Naive thymus-derived CD4-positive, alpha-beta T cell (primary cell): ENCODE measurements at regions of chr9 and their contacts with region 1.

Region 1: GRCh38 chr9:6008169-6008979 is 7.0 kb downstream of the RANBP6 start:
- DNase-seq: peak; percentile 79 to 98 (median 93)
- ATAC-seq: peak; percentile 84
- H3K4me3 ChIP-seq: peak overlapping the region; percentile 75
- H3K4me3 Mint-ChIP-seq: peak overlapping the region; percentile 74 to 99 (median 94)
- H3K27ac ChIP-seq: peak overlapping the region; percentile 97
- H3K27ac Mint-ChIP-seq: peak overlapping the region; percentile 83 to 97 (median 91)
- H3K4me1 ChIP-seq: peaks cover 20 to 36% of the 10 kb centered on the region in 2 donors
- H3K4me1 Mint-ChIP-seq: peaks cover 26 to 75% (median 65%) of the 10 kb centered on the region in 7 donors
- H3K27me3 ChIP-seq: no peaks in the 10 kb centered on the region
- H3K27me3 Mint-ChIP-seq: no peaks in the 10 kb centered on the region

Region 2: GRCh38 chr9:4792572-4793458 is 1215.6 kb before region 1 on chr9 and contains the start of gene RCL1:
- CTCF ChIA-PET with region 1: no interaction called
- POLR2A ChIA-PET with region 1: interaction called, 3 read pairs
- intact Hi-C with region 1: loop called (anchors 1 kb)
- DNase-seq: peak; percentile 93 to 98 (median 97)
- ATAC-seq: peak; percentile 96
- H3K4me3 ChIP-seq: peak within 1 kb of the TSS; percentile 99
- H3K4me3 Mint-ChIP-seq: peak within 1 kb of the TSS; percentile 83 to 97 (median 94)
- H3K27ac ChIP-seq: peak within 1 kb of the TSS; percentile 80
- H3K27ac Mint-ChIP-seq: peak within 1 kb of the TSS; percentile 71 to 97 (median 94)
- H3K4me1 ChIP-seq: peaks cover 4 to 18% of the 10 kb centered on the region in 2 donors
- H3K4me1 Mint-ChIP-seq: peaks cover 21 to 56% (median 45%) of the 10 kb centered on the region in 7 donors
- H3K27me3 ChIP-seq: no peaks in the 10 kb centered on the region
- H3K27me3 Mint-ChIP-seq: peaks cover 0 to 11% (median 0%) of the 10 kb centered on the region in 5 donors
- total RNA-seq, gene RCL1: 21.5 to 39.4 (median 23.4) TPM

Region 3: GRCh38 chr9:5450359-5451091 is 557.8 kb before region 1 on chr9 and contains the start of gene CD274:
- CTCF ChIA-PET with region 1: no interaction called
- POLR2A ChIA-PET with region 1: interaction called, 3 read pairs
- intact Hi-C with region 1: loop called (anchors 5 kb)
- DNase-seq: peak; percentile 61 to 89 (median 80)
- ATAC-seq: peak; percentile 95
- H3K4me3 ChIP-seq: peak within 1 kb of the TSS; percentile 78
- H3K4me3 Mint-ChIP-seq: peak within 1 kb of the TSS; percentile 92 to 98 (median 95)
- H3K27ac ChIP-seq: peak within 1 kb of the TSS; percentile 94
- H3K27ac Mint-ChIP-seq: peak within 1 kb of the TSS; percentile 97 to 99 (median 98)
- H3K4me1 ChIP-seq: peaks cover 0 to 11% of the 10 kb centered on the region in 2 donors
- H3K4me1 Mint-ChIP-seq: peaks cover 33 to 69% (median 62%) of the 10 kb centered on the region in 7 donors
- H3K27me3 ChIP-seq: no peaks in the 10 kb centered on the region
- H3K27me3 Mint-ChIP-seq: no peaks in the 10 kb centered on the region
- total RNA-seq, gene CD274: 2.9 to 38.7 (median 7.8) TPM

Region 4: DNA sequence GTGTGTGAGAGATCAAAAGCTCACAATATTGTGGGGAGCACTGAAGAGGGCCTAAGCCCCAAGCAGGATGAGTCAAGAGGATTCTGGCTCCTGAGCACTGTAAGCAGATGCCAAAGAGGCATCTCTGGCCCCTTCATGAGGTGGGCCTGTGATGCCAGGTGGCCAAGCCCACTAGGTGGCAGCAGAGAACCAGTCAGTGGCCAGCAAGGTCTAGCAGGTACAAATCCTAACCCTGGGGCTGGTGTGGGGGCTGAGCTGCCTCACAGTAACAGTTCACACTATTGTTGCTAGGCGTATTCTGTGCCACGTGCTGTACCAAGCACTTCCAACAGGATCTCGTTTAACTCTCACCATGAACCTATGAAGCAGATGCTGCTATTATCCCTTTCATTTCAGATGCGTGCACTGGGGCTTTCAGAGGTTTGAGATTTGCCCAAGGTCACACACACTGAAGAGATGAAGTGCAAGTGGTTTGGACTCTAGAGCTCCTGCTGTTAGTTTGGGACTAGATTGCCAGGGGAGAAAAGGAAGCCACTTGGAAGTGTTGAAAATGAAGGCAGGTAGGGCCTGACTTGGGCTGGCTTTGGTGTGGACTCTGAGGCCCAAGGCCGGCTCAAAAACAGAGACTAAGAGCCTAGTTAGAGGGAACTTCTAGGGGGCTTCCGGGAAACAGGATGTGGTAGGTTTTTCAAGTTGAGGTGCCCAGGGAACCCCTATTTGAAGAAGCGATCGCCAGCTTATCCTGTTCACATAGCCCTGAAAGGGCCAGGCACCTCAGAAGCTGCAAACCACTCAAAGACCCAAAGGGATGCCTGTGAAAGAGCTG is 122.0 kb before region 1 on chr9:
- CTCF ChIA-PET with region 1: no interaction called
- POLR2A ChIA-PET with region 1: no interaction called
- intact Hi-C with region 1: loop called in 1 of 2 experiments (anchors 5 kb)
- DNase-seq: peak; percentile 45 to 80 (median 64)
- ATAC-seq: peak; percentile 94
- H3K4me3 ChIP-seq: no peak overlapping the region
- H3K4me3 Mint-ChIP-seq: no peak overlapping the region
- H3K27ac ChIP-seq: no peak overlapping the region
- H3K27ac Mint-ChIP-seq: peak overlapping the region in 4 of 9 donors; percentile 11 to 64 (median 34)
- H3K4me1 ChIP-seq: peaks cover 0 to 3% of the 10 kb centered on the region in 2 donors
- H3K4me1 Mint-ChIP-seq: peaks cover 0 to 14% (median 7%) of the 10 kb centered on the region in 7 donors
- H3K27me3 ChIP-seq: no peaks in the 10 kb centered on the region
- H3K27me3 Mint-ChIP-seq: no peaks in the 10 kb centered on the region

Region 5: DNA sequence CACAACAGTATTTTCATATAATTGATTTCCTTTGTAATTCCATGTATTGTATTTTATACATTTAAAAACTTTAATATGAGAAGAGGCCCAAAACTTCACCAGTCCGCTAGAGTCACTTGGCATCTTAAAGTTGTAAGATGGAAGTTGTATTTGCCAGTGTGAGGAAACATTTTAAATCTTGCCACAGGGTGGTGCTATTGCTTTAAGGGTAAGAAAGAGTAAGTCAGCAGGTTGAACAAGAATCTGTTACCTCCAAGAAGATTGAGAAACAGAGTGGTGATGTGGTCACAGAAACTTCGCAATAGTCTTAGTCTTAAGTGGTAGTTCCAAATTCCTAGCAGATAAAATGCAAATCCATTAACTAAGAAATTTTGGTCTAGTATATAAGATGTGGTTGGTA is 46.8 kb after region 1 on chr9:
- CTCF ChIA-PET with region 1: no interaction called
- POLR2A ChIA-PET with region 1: no interaction called
- intact Hi-C with region 1: loop called (anchors 2 to 5 kb)
- DNase-seq: peak in 7 of 9 donors; percentile 42 to 69 (median 63)
- ATAC-seq: peak; percentile 86
- H3K4me3 ChIP-seq: no peak overlapping the region
- H3K4me3 Mint-ChIP-seq: no peak overlapping the region
- H3K27ac ChIP-seq: no peak overlapping the region
- H3K27ac Mint-ChIP-seq: peak overlapping the region in 2 of 9 donors; percentile 16 to 47
- H3K4me1 ChIP-seq: no peaks in the 10 kb centered on the region
- H3K4me1 Mint-ChIP-seq: peaks cover 0 to 7% (median 0%) of the 10 kb centered on the region in 7 donors
- H3K27me3 ChIP-seq: no peaks in the 10 kb centered on the region
- H3K27me3 Mint-ChIP-seq: peaks cover 0 to 19% (median 5%) of the 10 kb centered on the region in 5 donors

Region 6: GRCh38 chr9:6703898-6704639 is 695.7 kb after region 1 on chr9:
- CTCF ChIA-PET with region 1: no interaction called
- POLR2A ChIA-PET with region 1: no interaction called
- intact Hi-C with region 1: loop called in 1 of 2 experiments (anchors 5 kb)
- DNase-seq: peak; percentile 70 to 86 (median 77)
- ATAC-seq: peak; percentile 90
- H3K4me3 ChIP-seq: peak overlapping the region; percentile 98
- H3K4me3 Mint-ChIP-seq: peak overlapping the region; percentile 82 to 98 (median 95)
- H3K27ac ChIP-seq: peak overlapping the region; percentile 97
- H3K27ac Mint-ChIP-seq: peak overlapping the region; percentile 91 to 98 (median 93)
- H3K4me1 ChIP-seq: no peaks in the 10 kb centered on the region
- H3K4me1 Mint-ChIP-seq: peaks cover 3 to 15% (median 6%) of the 10 kb centered on the region in 7 donors
- H3K27me3 ChIP-seq: no peaks in the 10 kb centered on the region
- H3K27me3 Mint-ChIP-seq: peaks cover 0 to 3% (median 0%) of the 10 kb centered on the region in 5 donors